Endothelial cell of umbilical vein (primary cell): ENCODE measurements at regions of chr10 and their contacts with region 1.

Region 1: DNA sequence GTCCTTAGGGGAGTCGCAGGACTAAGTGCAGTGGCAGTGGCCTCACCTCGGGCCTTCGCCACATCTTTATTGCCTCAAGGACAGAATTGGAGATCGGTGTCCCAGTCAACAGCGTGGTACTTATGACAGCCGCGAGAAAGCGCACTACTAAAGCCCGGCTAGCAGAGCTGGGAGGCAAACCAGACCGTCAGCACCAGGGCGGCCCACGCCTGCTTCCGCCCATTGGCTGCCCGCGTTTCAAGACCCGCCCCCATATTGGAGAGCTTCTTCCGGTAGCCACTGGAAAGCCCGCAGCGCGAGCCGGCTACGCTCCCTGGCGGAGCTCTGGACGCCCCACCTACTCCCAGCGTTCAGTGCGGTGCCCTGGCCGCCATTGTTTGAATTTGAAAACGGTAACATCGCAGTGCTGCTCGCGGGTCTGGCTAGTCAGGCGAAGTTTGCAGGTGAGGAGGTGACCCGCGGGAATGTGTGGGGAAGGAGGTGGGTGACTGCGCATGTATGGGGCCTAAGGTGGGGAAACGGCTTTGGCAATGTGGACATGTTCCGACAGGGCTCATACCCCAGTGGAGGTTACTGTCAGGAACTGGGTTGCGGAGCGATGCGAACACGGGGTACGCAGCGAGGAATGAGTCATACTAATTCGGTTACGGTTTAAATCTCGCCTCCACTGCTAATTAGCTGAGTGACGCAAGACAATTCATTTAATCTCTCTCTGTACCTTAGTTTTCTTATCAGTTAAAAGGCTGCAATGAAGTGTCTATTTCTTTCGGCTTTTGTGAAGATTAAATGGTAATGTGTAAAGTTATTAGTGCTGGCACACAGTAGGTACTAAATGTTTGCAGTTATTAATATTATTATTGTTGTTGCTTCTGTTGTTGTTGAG is at the start of gene KIF20B:
- DNase-seq: peak; percentile 98
- H3K4me3 ChIP-seq: peak within 1 kb of the TSS; percentile 65 to 93 (median 82)
- H3K27ac ChIP-seq: peak within 1 kb of the TSS; percentile 54
- H3K4me1 ChIP-seq: peaks cover 20% of the 10 kb centered on the region
- H3K27me3 ChIP-seq: no peaks in the 10 kb centered on the region
- CTCF ChIP-seq: peak in 1 of 2 donors; percentile 7
- POLR2A ChIP-seq: peak; percentile 82
- total RNA-seq, gene KIF20B: 34.9 and 39.7 TPM in 2 replicates

Region 2: GRCh38 chr10:89278034-89278535 is 423.4 kb before region 1 on chr10:
- CTCF ChIA-PET with region 1: no interaction called
- POLR2A ChIA-PET with region 1: no interaction called
- dilution Hi-C with region 1: no loop called
- intact Hi-C with region 1: loop called (anchors 10 kb)
- DNase-seq: peak; percentile 98
- H3K4me3 ChIP-seq: peak overlapping the region in 1 of 3 experiments; percentile 12
- H3K27ac ChIP-seq: peak overlapping the region; percentile 49
- H3K4me1 ChIP-seq: peaks cover 38% of the 10 kb centered on the region
- H3K27me3 ChIP-seq: peaks cover 38 to 72% of the 10 kb centered on the region in 2 experiments
- CTCF ChIP-seq: no peak
- POLR2A ChIP-seq: no peak

Region 3: DNA sequence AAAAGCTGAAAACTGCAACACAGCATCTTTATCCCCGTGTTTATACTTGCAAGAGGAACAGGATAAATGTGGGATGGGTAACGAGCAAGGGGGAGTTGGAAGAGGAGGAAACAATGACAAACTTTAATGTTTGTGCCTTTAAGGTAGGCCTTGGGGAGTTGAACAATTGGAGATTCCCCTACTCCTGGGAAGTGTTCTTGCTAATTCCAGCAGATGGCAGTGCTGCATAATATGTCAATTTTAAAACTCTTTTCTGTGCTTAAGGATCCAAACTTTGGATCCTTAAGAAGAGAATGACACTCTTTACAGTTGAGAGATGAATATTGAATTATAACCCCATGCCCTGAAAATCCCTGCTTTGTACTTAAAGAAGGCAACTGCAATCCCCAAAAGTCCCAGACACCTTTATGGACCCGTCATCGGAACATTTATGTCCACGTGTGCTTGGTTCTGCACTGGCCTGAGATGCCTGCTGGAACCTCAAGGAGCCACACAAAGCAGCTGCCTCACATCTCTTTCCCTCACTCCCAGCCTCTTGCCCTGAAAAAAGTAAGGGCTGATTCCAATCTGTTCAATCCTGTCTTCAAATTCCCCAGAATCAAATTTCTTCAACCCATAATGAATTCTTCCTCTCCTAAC is 275.1 kb before region 1 on chr10:
- CTCF ChIA-PET with region 1: no interaction called
- POLR2A ChIA-PET with region 1: no interaction called
- dilution Hi-C with region 1: no loop called
- intact Hi-C with region 1: loop called (anchors 2 kb)
- DNase-seq: peak; percentile 56
- H3K4me3 ChIP-seq: no peak overlapping the region
- H3K27ac ChIP-seq: no peak overlapping the region
- H3K4me1 ChIP-seq: no peaks in the 10 kb centered on the region
- H3K27me3 ChIP-seq: no peaks in the 10 kb centered on the region
- CTCF ChIP-seq: peak; percentile 58
- POLR2A ChIP-seq: no peak

Region 4: GRCh38 chr10:89563861-89564478 is 137.5 kb before region 1 on chr10:
- CTCF ChIA-PET with region 1: no interaction called
- POLR2A ChIA-PET with region 1: no interaction called
- dilution Hi-C with region 1: no loop called
- intact Hi-C with region 1: loop called (anchors 5 kb)
- DNase-seq: peak; percentile 56
- H3K4me3 ChIP-seq: no peak overlapping the region
- H3K27ac ChIP-seq: no peak overlapping the region
- H3K4me1 ChIP-seq: no peaks in the 10 kb centered on the region
- H3K27me3 ChIP-seq: peaks cover 0 to 5% of the 10 kb centered on the region in 2 experiments
- CTCF ChIP-seq: peak; percentile 31 to 46
- POLR2A ChIP-seq: no peak

Region 5: GRCh38 chr10:89643431-89644331 is 57.8 kb before region 1 on chr10:
- CTCF ChIA-PET with region 1: interaction called, 8 read pairs
- POLR2A ChIA-PET with region 1: interaction called, 7 read pairs
- dilution Hi-C with region 1: no loop called
- intact Hi-C with region 1: loop called (anchors 1 kb)
- DNase-seq: peak; percentile 92
- H3K4me3 ChIP-seq: peak overlapping the region; percentile 23 to 62 (median 61)
- H3K27ac ChIP-seq: peak overlapping the region; percentile 2
- H3K4me1 ChIP-seq: peaks cover 12% of the 10 kb centered on the region
- H3K27me3 ChIP-seq: no peaks in the 10 kb centered on the region
- CTCF ChIP-seq: no peak
- POLR2A ChIP-seq: peak; percentile 75

Region 6: DNA sequence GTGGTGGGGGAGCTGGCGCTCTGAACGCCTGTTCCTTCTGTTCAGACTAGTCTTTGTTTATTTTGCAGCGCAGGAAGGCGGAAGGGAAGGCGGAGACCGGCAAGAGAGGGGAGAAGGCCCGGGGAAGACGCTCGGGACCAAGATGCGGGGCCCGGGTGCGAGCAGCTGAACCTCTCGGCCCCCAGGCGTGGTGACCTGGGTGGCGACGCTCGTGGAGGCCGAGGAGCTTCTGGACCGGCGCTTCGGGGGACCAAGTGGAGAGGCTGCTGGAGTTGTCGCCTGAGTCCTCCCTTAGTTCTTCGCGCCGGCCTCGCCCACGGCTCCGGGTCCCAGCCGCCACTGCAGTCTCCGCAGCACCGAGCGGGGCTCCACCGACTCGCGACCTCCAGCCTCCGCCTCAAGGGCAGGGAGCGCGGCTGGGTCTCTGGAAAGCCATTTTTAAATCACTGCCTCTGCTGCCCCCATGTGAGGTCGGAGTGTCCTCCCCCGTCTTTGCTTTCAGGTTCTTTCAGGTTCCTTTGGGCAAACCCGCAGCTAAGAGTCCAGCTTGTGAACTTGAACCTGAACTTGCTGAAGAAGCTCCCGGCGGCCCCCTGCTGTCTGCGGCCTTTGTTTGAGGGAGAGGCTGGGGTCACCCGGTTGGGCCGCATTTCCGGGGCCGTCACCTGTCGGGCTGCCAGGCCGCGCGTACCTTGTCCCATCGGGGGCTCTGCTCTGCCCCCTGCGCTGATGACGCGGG is 135.8 kb after region 1 on chr10:
- CTCF ChIA-PET with region 1: no interaction called
- POLR2A ChIA-PET with region 1: no interaction called
- dilution Hi-C with region 1: no loop called
- intact Hi-C with region 1: loop called (anchors 1 kb)
- DNase-seq: peak; percentile 13
- H3K4me3 ChIP-seq: peak overlapping the region; percentile 1 to 48 (median 17)
- H3K27ac ChIP-seq: no peak overlapping the region
- H3K4me1 ChIP-seq: peaks cover 4% of the 10 kb centered on the region
- H3K27me3 ChIP-seq: peaks cover 15 to 16% of the 10 kb centered on the region in 2 experiments
- CTCF ChIP-seq: no peak
- POLR2A ChIP-seq: no peak